HepG2 (cell line): ENCODE measurements at regions of chr6 and their contacts with region 1.

Region 1: DNA sequence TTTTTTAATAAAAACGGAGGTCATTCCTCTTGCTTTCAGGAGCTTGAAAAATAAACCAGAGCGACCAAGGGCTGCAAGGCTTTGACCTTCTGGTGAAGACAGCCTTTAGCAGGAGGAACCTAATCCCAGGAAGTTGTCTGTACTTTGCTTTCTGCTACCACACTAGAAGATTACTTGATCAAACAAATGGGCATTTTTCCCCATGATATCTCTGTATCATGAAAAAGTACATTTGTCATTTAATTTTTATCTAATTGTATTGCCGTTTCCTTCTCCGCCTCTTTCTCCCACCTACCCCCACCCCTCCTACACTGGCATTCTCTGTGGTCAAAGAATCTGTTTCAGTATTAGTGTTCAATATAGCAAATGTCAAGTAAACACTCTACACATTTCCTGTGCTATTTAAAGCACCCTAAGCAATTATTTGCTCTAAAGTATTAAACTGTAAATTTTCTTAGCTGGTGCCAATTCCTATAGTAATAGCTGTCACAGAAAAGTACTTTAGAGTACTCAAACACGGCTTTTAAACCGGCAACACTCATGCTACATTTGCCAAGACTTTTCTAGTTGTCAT is 29.7 kb downstream of the ATXN1 start:
- DNase-seq: no peak
- ATAC-seq: no peak
- H3K4me3 ChIP-seq: no peak overlapping the region
- H3K27ac ChIP-seq: peak overlapping the region; percentile 56
- H3K4me1 ChIP-seq: peaks cover 98% of the 10 kb centered on the region
- H3K27me3 ChIP-seq: no peaks in the 10 kb centered on the region
- CTCF ChIP-seq: no peak
- EP300 ChIP-seq: no peak
- POLR2A ChIP-seq: no peak
- RAD21 ChIP-seq: no peak

Region 2: GRCh38 chr6:16700202-16700915 is 31.2 kb before region 1 on chr6:
- CTCF ChIA-PET with region 1: no interaction called
- POLR2A ChIA-PET with region 1: interaction called, 24 read pairs
- in situ Hi-C with region 1: no loop called
- intact Hi-C with region 1: loop called (anchors 2 kb)
- DNase-seq: no peak
- ATAC-seq: no peak; the same call in 2 of the 3 replicates
- H3K4me3 ChIP-seq: no peak overlapping the region; a peak in 1 of 6 replicates
- H3K27ac ChIP-seq: peak overlapping the region; percentile 71
- H3K4me1 ChIP-seq: peaks cover 61% of the 10 kb centered on the region
- H3K27me3 ChIP-seq: no peaks in the 10 kb centered on the region
- CTCF ChIP-seq: no peak
- EP300 ChIP-seq: no peak
- POLR2A ChIP-seq: no peak
- RAD21 ChIP-seq: no peak

Region 3: GRCh38 chr6:16752236-16752867 is 20.8 kb after region 1 on chr6:
- CTCF ChIA-PET with region 1: no interaction called
- POLR2A ChIA-PET with region 1: interaction called, 17 read pairs
- in situ Hi-C with region 1: no loop called
- intact Hi-C with region 1: loop called (anchors 1 kb)
- DNase-seq: peak; percentile 74
- ATAC-seq: peak; percentile 53
- H3K4me3 ChIP-seq: no peak overlapping the region
- H3K27ac ChIP-seq: peak overlapping the region; percentile 45
- H3K4me1 ChIP-seq: peaks cover 98% of the 10 kb centered on the region
- H3K27me3 ChIP-seq: no peaks in the 10 kb centered on the region
- CTCF ChIP-seq: no peak
- EP300 ChIP-seq: peak in 1 of 2 experiments; percentile 33; a peak in 1 of 4 replicates
- POLR2A ChIP-seq: no peak
- RAD21 ChIP-seq: no peak

Region 4: DNA sequence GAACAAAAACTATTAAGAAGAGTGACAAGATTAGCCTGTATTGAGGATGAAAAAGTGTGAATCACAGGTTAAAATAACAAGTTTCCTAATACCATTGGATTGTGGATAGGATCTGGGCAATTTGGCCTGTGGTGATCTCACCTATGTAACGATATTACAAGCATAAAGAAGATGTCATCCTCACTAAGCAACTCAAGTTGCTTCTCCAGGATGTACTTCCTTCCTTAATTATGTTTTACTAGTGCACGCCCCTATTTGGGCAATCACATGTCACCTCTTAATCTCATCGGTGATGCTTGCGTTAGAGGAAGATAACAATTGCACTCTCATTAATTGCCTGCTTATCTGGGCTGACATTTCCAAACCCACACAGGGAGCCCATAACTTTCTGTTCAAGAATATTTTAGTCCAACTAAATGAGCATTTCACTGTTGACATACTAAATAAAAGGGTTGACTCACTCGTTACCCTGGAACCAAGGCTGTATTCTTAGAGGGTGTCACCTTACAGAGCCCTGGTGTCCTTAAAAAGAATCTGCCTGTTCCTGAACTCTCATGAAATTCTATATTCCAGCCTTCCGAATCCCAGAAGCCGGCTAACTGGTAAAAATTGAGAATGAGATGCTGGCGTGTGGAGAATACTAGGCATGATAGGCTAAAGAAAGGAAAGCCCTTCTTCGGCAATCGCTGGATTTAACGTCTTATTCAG is 117.9 kb after region 1 on chr6:
- CTCF ChIA-PET with region 1: no interaction called
- POLR2A ChIA-PET with region 1: no interaction called
- in situ Hi-C with region 1: no loop called
- intact Hi-C with region 1: no loop called
- DNase-seq: peak; percentile 6
- ATAC-seq: no peak; the same call in 2 of the 3 replicates
- H3K4me3 ChIP-seq: no peak overlapping the region
- H3K27ac ChIP-seq: no peak overlapping the region
- H3K4me1 ChIP-seq: no peaks in the 10 kb centered on the region
- H3K27me3 ChIP-seq: no peaks in the 10 kb centered on the region; a peak in 2 of 5 replicates
- CTCF ChIP-seq: no peak
- EP300 ChIP-seq: no peak
- POLR2A ChIP-seq: no peak
- RAD21 ChIP-seq: no peak